A673 (cell line): ENCODE measurements at regions of chr5 and their contacts with region 1.

Region 1: DNA sequence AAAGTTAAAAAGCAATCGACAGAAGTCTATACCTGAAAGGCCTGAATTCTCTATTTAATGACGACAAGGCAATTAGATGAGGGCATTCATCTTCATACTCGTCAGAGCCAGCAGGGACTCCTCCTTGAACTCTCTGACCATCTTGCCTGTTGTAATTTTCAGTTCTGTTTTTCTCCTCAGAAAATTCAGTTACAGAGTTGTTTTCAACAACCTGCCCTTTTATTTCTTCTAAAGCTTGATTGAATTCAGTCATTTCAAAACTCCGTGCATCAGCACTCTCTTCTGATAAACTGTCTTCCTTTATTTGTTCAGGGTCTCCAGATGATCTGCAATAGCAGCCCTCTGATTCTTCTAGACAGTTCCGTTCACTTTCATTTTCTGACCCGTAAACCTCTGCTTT is 15.6 kb downstream of the RIOK2 start:
- DNase-seq: no peak
- H3K4me3 ChIP-seq: no peak overlapping the region
- H3K27ac ChIP-seq: no peak overlapping the region
- H3K4me1 ChIP-seq: no peaks in the 10 kb centered on the region
- H3K27me3 ChIP-seq: no peaks in the 10 kb centered on the region
- CTCF ChIP-seq: no peak

Region 2: DNA sequence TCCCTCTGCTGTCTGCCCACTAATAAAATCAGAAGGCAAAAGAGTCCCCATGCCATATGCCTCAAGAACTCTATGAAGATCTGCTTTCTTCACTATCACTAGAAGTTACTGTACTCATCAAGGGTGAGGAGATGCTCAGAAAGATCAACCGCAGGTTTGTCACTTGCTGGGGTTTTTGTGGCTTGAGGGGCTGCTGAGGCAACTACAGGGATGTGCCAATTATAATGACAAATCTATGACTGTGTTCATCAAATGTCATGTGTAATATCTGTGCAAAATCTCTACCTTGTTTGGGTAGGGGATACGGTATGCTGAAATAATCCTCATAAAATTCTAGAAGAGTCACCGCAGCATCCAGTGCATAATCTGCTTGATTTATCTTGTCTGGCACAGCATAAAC is 372.7 kb before region 1 on chr5:
- CTCF ChIA-PET with region 1: no interaction called
- POLR2A ChIA-PET with region 1: interaction called, 11 read pairs
- intact Hi-C with region 1: no loop called
- DNase-seq: no peak
- H3K4me3 ChIP-seq: no peak overlapping the region
- H3K27ac ChIP-seq: no peak overlapping the region
- H3K4me1 ChIP-seq: no peaks in the 10 kb centered on the region
- H3K27me3 ChIP-seq: no peaks in the 10 kb centered on the region
- CTCF ChIP-seq: no peak

Region 3: GRCh38 chr5:97142521-97143254 is 24.7 kb before region 1 on chr5 and contains the start of gene LIX1:
- CTCF ChIA-PET with region 1: no interaction called
- POLR2A ChIA-PET with region 1: no interaction called
- intact Hi-C with region 1: no loop called
- DNase-seq: peak; percentile 86
- H3K4me3 ChIP-seq: no peak within 1 kb of the TSS
- H3K27ac ChIP-seq: no peak within 1 kb of the TSS
- H3K4me1 ChIP-seq: no peaks in the 10 kb centered on the region
- H3K27me3 ChIP-seq: no peaks in the 10 kb centered on the region
- CTCF ChIP-seq: peak; percentile 75
- total RNA-seq, gene LIX1: not detected in 2 replicates